ENCODE measurements at regions of chr7 and their contacts with region 1.

Region 1: DNA sequence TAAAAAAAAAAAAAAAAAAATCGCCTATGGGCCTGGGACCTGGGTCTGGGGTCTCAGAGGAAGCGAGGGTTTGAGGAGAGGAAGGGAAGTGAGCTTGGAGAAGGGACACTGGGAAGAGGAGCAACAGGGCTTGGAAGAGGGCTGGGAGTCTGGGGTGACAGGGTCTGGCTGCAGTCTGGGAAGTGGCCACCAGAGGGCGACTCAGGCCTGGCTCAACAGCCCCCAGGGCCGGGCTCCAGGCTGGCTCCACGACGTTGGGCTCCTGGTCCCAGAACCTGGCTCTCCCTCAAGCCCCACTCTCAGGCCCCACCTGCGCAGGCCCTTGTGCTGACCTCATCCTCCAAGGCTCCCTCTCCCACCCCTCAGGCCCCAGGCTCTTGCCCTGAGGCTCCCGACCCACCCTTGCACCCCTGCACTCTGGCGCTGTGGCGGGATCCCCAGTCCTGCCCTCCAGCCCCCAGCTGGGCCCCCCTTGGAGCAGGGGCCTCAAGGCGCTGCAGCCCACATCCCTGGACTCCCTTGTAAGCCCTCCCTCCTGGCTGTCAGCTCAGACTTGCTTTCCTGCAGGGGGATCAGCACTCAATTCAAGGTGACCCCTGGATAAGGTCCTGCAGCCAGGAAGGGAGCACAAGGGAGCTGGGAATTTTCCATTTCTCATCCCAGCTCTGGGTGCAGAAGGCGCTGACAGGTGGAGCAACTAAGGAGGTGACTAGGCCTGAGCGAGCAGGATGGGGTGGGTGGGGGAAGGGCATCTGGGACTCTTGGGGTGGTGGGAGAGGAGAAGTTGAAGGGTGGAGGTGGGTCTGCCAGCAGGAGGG is 5.4 kb upstream of the SPACDR start:
- DNase-seq: peak; percentile 98
- H3K4me3 ChIP-seq: no peak overlapping the region; a peak in 1 of 4 replicates
- H3K27ac ChIP-seq: no peak overlapping the region; a peak in 1 of 4 replicates
- H3K4me1 ChIP-seq: peaks cover 3 to 15% of the 10 kb centered on the region in 2 experiments; a peak in 3 of 4 replicates
- H3K27me3 ChIP-seq: no peaks in the 10 kb centered on the region
- CTCF ChIP-seq: peak; percentile 98
- EP300 ChIP-seq: no peak
- RAD21 ChIP-seq: peak; percentile 97

Region 2: GRCh38 chr7:100435401-100436304 is 33.8 kb before region 1 on chr7:
- CTCF ChIA-PET with region 1: interaction called, 13 read pairs
- POLR2A ChIA-PET with region 1: no interaction called
- DNase-seq: peak; percentile 81
- H3K4me3 ChIP-seq: peak overlapping the region; percentile 79 to 93
- H3K27ac ChIP-seq: peak overlapping the region; percentile 79 to 92
- H3K4me1 ChIP-seq: peaks cover 22 to 46% of the 10 kb centered on the region in 2 experiments; a peak in 3 of 4 replicates
- H3K27me3 ChIP-seq: no peaks in the 10 kb centered on the region
- CTCF ChIP-seq: no peak
- EP300 ChIP-seq: no peak
- RAD21 ChIP-seq: no peak

Region 3: GRCh38 chr7:100456558-100456957 is 12.9 kb before region 1 on chr7:
- CTCF ChIA-PET with region 1: interaction called, 57 read pairs
- POLR2A ChIA-PET with region 1: interaction called, 3 read pairs
- DNase-seq: no peak
- H3K4me3 ChIP-seq: no peak overlapping the region
- H3K27ac ChIP-seq: no peak overlapping the region
- H3K4me1 ChIP-seq: no peaks in the 10 kb centered on the region
- H3K27me3 ChIP-seq: no peaks in the 10 kb centered on the region
- CTCF ChIP-seq: 0 out of 2 replicates have a peak, but pooled peaks have one; percentile 15
- EP300 ChIP-seq: no peak
- RAD21 ChIP-seq: no peak

Region 4: GRCh38 chr7:100538654-100539435 is 69.4 kb after region 1 on chr7 and contains the start of gene AGFG2:
- CTCF ChIA-PET with region 1: interaction called, 15 read pairs
- POLR2A ChIA-PET with region 1: no interaction called
- DNase-seq: peak; percentile 100
- H3K4me3 ChIP-seq: peak within 1 kb of the TSS; percentile 69 to 92
- H3K27ac ChIP-seq: peak within 1 kb of the TSS in 1 of 2 experiments; percentile 63; a peak in 2 of 4 replicates
- H3K4me1 ChIP-seq: peaks cover 0 to 11% of the 10 kb centered on the region in 2 experiments; a peak in 2 of 4 replicates
- H3K27me3 ChIP-seq: no peaks in the 10 kb centered on the region
- CTCF ChIP-seq: no peak
- EP300 ChIP-seq: 0 out of 4 replicates have a peak, but pooled peaks of 1 of the 2 experiments have one; percentile 10
- RAD21 ChIP-seq: no peak
- polyA plus RNA-seq, gene AGFG2: 16.1 and 23.1 TPM in 2 replicates

Region 5: GRCh38 chr7:100556541-100556940 is 87.1 kb after region 1 on chr7:
- CTCF ChIA-PET with region 1: interaction called, 398 read pairs
- POLR2A ChIA-PET with region 1: interaction called, 6 read pairs
- DNase-seq: no peak
- H3K4me3 ChIP-seq: no peak overlapping the region
- H3K27ac ChIP-seq: no peak overlapping the region
- H3K4me1 ChIP-seq: no peaks in the 10 kb centered on the region; a peak in 1 of 4 replicates
- H3K27me3 ChIP-seq: no peaks in the 10 kb centered on the region
- CTCF ChIP-seq: no peak
- EP300 ChIP-seq: no peak
- RAD21 ChIP-seq: no peak

Region 6: GRCh38 chr7:100586266-100587025 is 117.0 kb after region 1 on chr7 and contains the start of gene FBXO24:
- CTCF ChIA-PET with region 1: interaction called, 25 read pairs
- POLR2A ChIA-PET with region 1: interaction called, 3 read pairs
- DNase-seq: peak; percentile 100
- H3K4me3 ChIP-seq: peak within 1 kb of the TSS; percentile 83 to 92
- H3K27ac ChIP-seq: peak within 1 kb of the TSS; percentile 77 to 94
- H3K4me1 ChIP-seq: peaks cover 6 to 15% of the 10 kb centered on the region in 2 experiments; a peak in 2 of 4 replicates
- H3K27me3 ChIP-seq: no peaks in the 10 kb centered on the region
- CTCF ChIP-seq: no peak
- EP300 ChIP-seq: no peak; a peak in 1 of 4 replicates
- RAD21 ChIP-seq: no peak
- polyA plus RNA-seq, gene FBXO24: 0.71 and 0.94 TPM in 2 replicates

Region 7: GRCh38 chr7:100726996-100727761 is 257.7 kb after region 1 on chr7:
- CTCF ChIA-PET with region 1: interaction called, 15 read pairs
- POLR2A ChIA-PET with region 1: no interaction called
- DNase-seq: no peak
- H3K4me3 ChIP-seq: no peak overlapping the region
- H3K27ac ChIP-seq: no peak overlapping the region
- H3K4me1 ChIP-seq: no peaks in the 10 kb centered on the region; a peak in 1 of 4 replicates
- H3K27me3 ChIP-seq: peaks cover 4% of the 10 kb centered on the region; the same call in 1 of the 2 replicates
- CTCF ChIP-seq: no peak
- EP300 ChIP-seq: no peak
- RAD21 ChIP-seq: no peak

Region 8: GRCh38 chr7:100840470-100841100 is 371.1 kb after region 1 on chr7:
- CTCF ChIA-PET with region 1: no interaction called
- POLR2A ChIA-PET with region 1: no interaction called
- DNase-seq: no peak
- H3K4me3 ChIP-seq: no peak overlapping the region
- H3K27ac ChIP-seq: no peak overlapping the region
- H3K4me1 ChIP-seq: no peaks in the 10 kb centered on the region
- H3K27me3 ChIP-seq: no peaks in the 10 kb centered on the region
- CTCF ChIP-seq: no peak
- EP300 ChIP-seq: no peak
- RAD21 ChIP-seq: no peak

Measured in SK-N-SH (cell line).